Dorsolateral prefrontal cortex (tissue), 120 donors: ENCODE measurements at regions of chr5 and their contacts with region 1.

Region 1: DNA sequence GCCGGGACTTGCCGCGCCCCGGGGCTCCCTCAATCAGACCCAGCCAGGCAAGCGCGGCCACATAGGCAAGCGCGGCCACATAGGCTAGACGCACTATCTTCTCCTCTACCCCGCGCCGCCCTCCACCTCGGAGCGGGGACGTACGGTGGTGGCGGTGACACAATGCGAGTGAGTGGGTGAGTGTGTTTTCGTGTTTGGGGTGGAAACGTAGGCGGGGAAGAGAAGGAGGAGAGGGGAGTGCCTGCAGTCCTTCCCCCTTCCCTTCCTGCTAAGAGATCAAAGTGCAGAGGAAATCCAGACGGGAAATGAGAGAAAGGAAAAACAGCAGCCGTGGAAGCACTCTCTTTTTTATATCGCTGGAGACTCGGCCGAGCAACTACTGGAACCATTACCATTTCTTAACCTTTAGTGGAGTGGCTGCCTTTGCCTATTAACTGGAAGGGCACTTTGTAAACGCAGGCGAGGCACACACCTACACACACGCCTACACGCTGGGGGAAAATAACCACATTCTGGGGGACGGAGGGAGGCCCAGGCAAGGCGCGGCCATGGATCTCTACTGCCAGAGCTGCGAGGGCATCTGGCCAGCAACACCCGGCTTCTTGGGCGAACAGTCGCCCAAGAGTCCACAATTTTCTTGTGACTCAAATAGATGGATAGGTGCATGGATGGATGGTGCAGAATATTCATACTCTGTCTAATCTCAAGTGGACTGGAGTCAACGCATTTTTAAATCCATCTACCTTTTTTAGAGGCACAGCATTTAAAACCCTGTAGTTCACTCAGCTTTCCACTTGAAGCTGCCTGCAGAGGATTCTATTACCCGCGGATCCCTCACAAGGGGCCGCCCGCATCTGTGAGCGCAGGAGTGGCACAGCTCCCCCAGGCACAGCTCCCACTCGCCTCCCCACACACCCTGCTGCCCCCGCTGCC is 2.1 kb downstream of the EDIL3 start:
- DNase-seq: peak; percentile 56 to 76 (median 64)
- H3K4me3 ChIP-seq: peak overlapping the region; percentile 57 to 91 (median 78)
- H3K27ac ChIP-seq: peak overlapping the region; percentile 71 to 96 (median 93)
- H3K27me3 ChIP-seq: peaks cover 0 to 15% (median 0%) of the 10 kb centered on the region in 45 donors
- CTCF ChIP-seq: peak in 4 of 56 donors; percentile 10 to 21 (median 12)

Region 2: DNA sequence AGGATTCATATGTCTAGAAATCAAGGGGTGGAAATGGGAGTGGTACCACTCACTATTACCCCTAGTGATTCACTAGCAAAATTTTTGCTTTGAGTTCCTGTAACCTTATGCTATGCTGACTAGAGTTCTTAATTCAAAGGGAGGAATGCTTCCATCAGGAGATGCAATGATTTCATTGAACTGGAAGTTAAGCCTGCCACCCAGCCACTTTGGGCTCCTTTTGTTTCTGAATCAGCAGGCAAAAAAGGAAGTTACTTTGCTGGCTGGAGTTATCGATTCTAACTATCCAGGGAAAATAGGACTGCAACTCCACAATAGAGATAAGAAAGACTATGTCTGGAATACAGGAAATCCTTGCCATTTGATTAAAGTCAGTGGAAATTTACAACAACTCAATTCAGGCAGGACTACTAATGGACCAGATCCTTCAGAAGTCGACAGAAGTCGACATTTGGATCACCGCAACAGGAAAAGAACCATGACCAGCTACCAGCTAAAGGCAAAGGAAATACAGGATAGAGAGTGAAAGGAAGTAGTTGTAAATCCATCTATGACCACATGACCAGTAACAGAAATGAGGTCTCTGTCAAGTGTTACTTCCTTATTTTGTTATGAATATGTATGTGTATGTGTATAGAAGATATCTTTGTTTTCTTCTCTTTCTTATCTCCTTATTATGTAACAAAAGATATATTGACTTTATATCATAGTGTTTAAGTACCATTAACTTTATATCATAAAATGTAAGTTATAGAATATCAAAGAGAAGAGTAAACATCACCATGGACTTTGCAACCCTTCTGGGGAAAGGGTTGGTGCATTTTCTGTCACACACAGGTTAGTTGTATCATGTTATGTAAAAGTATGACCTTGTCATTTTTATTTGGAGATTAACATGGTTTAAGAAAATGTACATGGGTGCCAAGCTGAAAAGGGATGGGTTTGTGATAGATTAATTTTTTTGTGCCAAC is 463.3 kb before region 1 on chr5:
- intact Hi-C with region 1: loop called (anchors 2 to 5 kb)
- DNase-seq: no peak
- H3K4me3 ChIP-seq: no peak overlapping the region
- H3K27ac ChIP-seq: no peak overlapping the region
- H3K27me3 ChIP-seq: no peaks in the 10 kb centered on the region
- CTCF ChIP-seq: no peak

Region 3: GRCh38 chr5:84274585-84275468 is 107.8 kb before region 1 on chr5:
- intact Hi-C with region 1: loop called in 1 of 2 experiments (anchors 5 kb)
- DNase-seq: peak in 2 of 10 donors; percentile 49 to 60
- H3K4me3 ChIP-seq: no peak overlapping the region
- H3K27ac ChIP-seq: peak overlapping the region in 20 of 59 donors; percentile 1 to 72 (median 36)
- H3K27me3 ChIP-seq: no peaks in the 10 kb centered on the region
- CTCF ChIP-seq: peak; percentile 38 to 80 (median 61)

Region 4: DNA sequence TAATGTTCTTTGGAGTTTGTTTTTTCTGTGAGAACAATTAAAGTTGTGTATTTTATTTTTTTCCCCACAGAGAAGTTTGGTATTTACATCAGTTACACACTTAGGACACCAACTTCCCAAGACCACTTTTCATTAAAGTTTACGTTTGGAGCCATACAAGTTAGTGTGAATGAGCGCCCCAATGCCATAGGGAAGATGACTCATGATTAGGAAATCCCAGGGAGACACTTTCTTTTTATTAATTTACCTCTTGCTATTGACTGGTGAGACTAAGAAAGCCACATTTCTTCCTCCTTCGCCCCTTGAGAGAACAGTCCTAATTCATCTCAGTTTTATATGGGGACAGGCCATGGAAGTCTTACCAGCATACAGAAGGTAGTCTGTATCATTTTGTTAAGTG is 55.0 kb before region 1 on chr5:
- intact Hi-C with region 1: no loop called
- DNase-seq: no peak
- H3K4me3 ChIP-seq: no peak overlapping the region
- H3K27ac ChIP-seq: peak overlapping the region in 13 of 59 donors; percentile 4 to 75 (median 53)
- H3K27me3 ChIP-seq: no peaks in the 10 kb centered on the region
- CTCF ChIP-seq: no peak

Region 5: DNA sequence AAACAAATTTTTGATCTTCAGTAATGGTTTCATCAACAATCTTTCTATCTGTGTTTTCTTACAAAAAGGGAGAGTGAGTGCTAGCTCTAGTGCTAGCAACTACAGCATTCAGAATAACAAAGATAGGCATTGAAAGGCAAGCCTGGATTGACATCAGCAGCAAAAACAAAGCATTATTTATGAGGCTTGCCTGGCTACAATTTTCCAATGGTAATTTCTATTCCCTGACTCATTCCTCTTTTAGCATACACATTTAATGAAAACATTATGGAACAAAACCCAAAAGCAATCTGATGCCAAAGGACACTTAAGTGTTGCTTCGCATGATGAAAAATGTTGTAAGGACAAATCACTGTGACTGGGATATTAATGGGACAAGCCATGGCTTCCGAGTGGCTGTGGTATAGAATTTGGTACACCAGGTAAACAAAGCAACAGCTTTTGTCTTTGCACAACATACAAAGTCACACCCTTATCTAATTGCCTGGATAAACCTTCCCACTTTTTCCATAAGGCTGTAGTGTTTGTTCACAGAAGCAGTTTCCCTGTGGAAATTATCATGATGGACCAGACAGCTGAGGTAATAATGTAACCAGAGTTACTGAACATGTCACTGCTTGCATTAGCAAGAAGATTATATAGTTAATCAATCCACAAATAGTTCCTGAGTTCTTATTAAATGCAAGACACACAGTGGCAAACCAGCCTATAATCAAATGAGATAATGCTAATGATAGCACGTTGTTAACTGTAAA is 181.9 kb after region 1 on chr5:
- intact Hi-C with region 1: loop called in 1 of 2 experiments (anchors 5 kb)
- DNase-seq: no peak
- H3K4me3 ChIP-seq: peak overlapping the region in 18 of 59 donors; percentile 1 to 45 (median 18)
- H3K27ac ChIP-seq: peak overlapping the region; percentile 2 to 100 (median 97)
- H3K27me3 ChIP-seq: no peaks in the 10 kb centered on the region
- CTCF ChIP-seq: peak in 5 of 56 donors; percentile 9 to 26 (median 15)

Region 6: GRCh38 chr5:84805473-84805872 is 422.8 kb after region 1 on chr5:
- intact Hi-C with region 1: loop called in 1 of 2 experiments (anchors 10 kb)
- DNase-seq: no peak
- H3K4me3 ChIP-seq: no peak overlapping the region
- H3K27ac ChIP-seq: peak overlapping the region in 10 of 59 donors; percentile 6 to 71 (median 56)
- H3K27me3 ChIP-seq: no peaks in the 10 kb centered on the region
- CTCF ChIP-seq: peak in 21 of 56 donors; percentile 6 to 53 (median 22)